Activated CD4-positive, alpha-beta T cell treated with anti-CD3 and anti-CD28 coated beads, Interleukin-2, amount 10 ng/mL, durations not matched to agents 24 days and 14 days (primary cell): ENCODE measurements at regions of chr10 and their contacts with region 1.

Region 1: GRCh38 chr10:62610649-62611229 is 193.8 kb upstream of the ADO start:
- DNase-seq: peak; percentile 93
- H3K4me3 Mint-ChIP-seq: no peak overlapping the region
- H3K27ac Mint-ChIP-seq: peak overlapping the region; percentile 27
- H3K4me1 Mint-ChIP-seq: peaks cover 46% of the 10 kb centered on the region
- H3K27me3 Mint-ChIP-seq: peaks cover 5% of the 10 kb centered on the region

Region 2: GRCh38 chr10:62594093-62594520 is 16.6 kb before region 1 on chr10:
- intact Hi-C with region 1: loop called (anchors 2 kb)
- DNase-seq: peak; percentile 86
- H3K4me3 Mint-ChIP-seq: no peak overlapping the region
- H3K27ac Mint-ChIP-seq: no peak overlapping the region
- H3K4me1 Mint-ChIP-seq: peaks cover 3% of the 10 kb centered on the region
- H3K27me3 Mint-ChIP-seq: peaks cover 22% of the 10 kb centered on the region

Region 3: DNA sequence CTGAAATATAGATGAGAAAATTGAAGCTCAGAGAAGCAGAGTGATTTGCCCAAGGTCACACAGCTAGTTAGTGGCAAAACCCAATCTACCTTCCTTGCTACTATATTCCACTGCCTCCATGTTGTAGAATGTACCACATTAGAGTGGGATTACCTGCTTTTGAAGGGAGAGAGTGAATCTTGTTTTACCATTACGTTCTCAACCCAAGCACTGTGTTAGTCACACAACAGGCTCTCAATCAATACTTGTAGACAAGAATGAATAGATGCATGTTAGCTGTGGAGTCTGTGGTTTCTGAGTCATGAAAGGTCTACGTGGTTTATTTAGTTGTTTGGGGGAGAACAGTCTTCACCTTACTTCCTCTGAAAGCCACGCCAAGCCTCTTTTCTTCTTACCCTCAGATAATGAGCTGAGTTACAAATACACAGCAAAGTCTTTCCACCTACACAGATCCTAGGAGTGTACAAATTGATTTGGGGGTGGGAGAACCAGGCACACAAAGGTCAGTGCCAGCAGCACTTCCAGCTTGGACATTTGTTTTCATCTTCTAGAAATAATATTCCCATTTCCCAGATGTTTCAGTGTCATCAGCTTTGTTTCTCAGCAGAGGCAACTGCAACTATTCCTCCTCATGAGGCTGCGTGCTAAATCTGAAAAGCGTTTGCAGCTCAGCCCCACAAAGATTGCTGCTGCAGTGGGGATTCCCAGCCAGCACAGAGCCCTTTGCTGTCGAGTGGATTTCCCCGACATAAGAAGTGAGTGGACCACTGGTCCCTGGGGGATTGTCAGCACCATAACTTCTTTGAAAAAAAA is 122.3 kb after region 1 on chr10:
- intact Hi-C with region 1: loop called (anchors 1 kb)
- DNase-seq: peak; percentile 91
- H3K4me3 Mint-ChIP-seq: no peak overlapping the region
- H3K27ac Mint-ChIP-seq: no peak overlapping the region
- H3K4me1 Mint-ChIP-seq: peaks cover 43% of the 10 kb centered on the region
- H3K27me3 Mint-ChIP-seq: peaks cover 1% of the 10 kb centered on the region

Region 4: DNA sequence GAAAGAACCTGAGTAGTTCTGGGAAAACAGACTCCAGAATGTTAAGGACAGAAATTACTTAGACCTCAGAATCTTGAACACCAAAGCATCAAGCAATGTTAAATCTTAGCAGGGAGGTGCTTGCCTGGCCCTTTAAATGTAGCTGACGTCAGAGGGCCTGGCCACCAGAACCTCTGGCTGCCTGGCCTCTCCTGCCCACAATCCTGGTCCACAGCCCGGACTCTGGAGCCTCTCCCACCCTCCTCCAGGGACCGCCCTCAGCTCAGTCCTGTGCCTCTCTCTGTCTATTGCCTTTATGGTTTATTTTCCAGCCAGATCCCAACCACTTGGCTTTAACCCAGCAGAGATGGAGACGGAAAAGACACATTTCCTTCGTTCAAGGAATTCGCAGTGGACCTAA is 247.6 kb after region 1 on chr10:
- intact Hi-C with region 1: loop called (anchors 1 kb)
- DNase-seq: no peak
- H3K4me3 Mint-ChIP-seq: no peak overlapping the region
- H3K27ac Mint-ChIP-seq: no peak overlapping the region
- H3K4me1 Mint-ChIP-seq: peaks cover 60% of the 10 kb centered on the region
- H3K27me3 Mint-ChIP-seq: peaks cover 4% of the 10 kb centered on the region

Region 5: DNA sequence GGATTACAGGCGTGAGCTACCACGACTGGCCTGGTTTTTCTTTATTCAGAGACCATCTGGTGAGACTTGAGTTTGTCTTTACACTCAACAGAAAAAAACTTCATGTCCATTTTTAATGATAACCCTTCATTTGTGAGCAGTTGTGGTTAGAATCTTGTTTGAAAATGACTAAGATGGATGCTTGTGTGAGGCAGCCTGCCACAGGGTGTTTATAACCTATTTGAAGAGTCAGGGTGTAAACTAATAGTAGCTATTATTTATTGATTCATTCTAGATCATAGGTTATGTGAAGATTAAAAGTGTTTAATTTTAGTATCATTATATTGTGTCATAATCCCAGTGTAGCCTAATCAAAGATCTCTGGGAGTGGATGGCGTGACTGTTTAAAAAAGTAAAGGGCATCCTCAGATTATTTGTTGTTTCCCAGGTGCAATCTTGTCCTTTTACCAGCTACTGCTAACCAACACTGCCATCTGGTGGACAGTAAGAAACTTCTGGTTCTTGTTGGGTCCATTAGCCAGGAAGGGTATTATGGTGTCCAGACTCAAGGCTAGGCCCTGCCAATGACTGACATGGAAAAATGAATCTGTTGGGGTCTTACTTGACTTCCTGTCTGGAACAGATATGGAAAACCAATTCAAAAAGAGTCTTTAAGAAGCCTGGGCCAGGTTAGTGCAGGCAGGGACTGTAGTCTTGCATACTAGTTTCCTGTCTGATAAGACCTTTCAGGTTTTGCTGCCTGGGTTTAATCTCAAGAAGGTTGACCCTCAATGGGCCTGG is 547.3 kb after region 1 on chr10:
- intact Hi-C with region 1: loop called (anchors 2 kb)
- DNase-seq: peak; percentile 84
- H3K4me3 Mint-ChIP-seq: no peak overlapping the region
- H3K27ac Mint-ChIP-seq: no peak overlapping the region
- H3K4me1 Mint-ChIP-seq: peaks cover 19% of the 10 kb centered on the region
- H3K27me3 Mint-ChIP-seq: no peaks in the 10 kb centered on the region

Region 6: DNA sequence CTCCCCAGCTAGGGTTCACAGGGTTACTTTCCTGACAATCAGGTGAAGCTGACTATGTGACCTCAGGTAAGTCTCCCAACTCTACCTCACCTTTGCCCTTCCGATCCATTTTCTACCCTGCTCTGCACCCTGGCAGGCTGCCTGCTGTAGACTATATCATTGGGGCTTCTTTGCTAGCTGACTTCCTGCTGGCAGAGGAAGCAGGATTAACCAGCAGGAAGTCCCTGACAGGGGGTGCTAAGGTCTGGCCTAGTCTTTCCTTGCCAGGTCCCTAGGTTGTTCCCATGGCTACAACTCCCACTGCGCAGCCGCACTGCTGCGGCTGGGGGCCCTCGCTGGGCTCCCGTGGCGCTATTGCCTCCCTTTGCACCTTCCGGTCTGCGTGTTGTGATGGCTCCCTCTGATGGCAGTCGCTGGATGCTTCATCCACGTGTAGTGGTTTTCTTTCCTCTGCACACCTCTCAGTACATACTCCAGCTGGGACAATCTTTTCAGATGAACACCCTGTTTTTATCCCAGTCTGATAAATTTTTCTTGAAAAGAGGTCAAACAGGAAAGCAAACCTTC is 1276.4 kb after region 1 on chr10:
- intact Hi-C with region 1: no loop called
- DNase-seq: no peak
- H3K4me3 Mint-ChIP-seq: no peak overlapping the region
- H3K27ac Mint-ChIP-seq: no peak overlapping the region
- H3K4me1 Mint-ChIP-seq: no peaks in the 10 kb centered on the region
- H3K27me3 Mint-ChIP-seq: peaks cover 1% of the 10 kb centered on the region